ENCODE measurements at regions of chr6 and their contacts with region 1.

Region 1: GRCh38 chr6:38012573-38012972 is 193.0 kb downstream of the ZFAND3 start:
- DNase-seq: no peak
- ATAC-seq: peak; percentile 89
- H3K4me3 Mint-ChIP-seq: no peak overlapping the region
- H3K27ac Mint-ChIP-seq: no peak overlapping the region
- H3K4me1 Mint-ChIP-seq: peaks cover 33% of the 10 kb centered on the region
- H3K27me3 Mint-ChIP-seq: no peaks in the 10 kb centered on the region
- CTCF ChIP-seq: no peak

Region 2: GRCh38 chr6:37324131-37325033 is 688.2 kb before region 1 on chr6:
- CTCF ChIA-PET with region 1: no interaction called
- POLR2A ChIA-PET with region 1: no interaction called
- intact Hi-C with region 1: loop called (anchors 5 kb)
- DNase-seq: no peak
- ATAC-seq: no peak
- H3K4me3 Mint-ChIP-seq: no peak overlapping the region
- H3K27ac Mint-ChIP-seq: no peak overlapping the region
- H3K4me1 Mint-ChIP-seq: peaks cover 2% of the 10 kb centered on the region
- H3K27me3 Mint-ChIP-seq: no peaks in the 10 kb centered on the region
- CTCF ChIP-seq: no peak

Region 3: DNA sequence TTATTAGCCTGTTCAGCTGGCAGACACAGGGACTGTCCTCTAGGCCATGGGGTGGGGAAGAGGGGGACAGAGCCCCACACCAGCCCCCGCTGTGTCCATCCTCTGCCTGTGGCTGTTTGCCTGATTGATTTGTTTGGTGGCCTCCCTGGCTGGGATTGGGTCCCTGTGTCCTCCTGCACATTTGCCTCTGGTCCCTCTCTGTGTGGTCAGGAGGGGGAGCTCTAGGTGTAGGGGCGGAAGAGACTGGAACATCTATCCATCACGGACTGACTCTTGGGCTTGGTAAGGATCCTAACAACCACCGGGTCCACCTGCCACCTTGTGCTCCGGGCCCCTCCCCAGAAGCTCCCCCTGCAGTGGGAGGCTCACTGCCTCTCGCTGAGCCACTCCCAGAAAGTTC is 474.5 kb before region 1 on chr6:
- CTCF ChIA-PET with region 1: no interaction called
- POLR2A ChIA-PET with region 1: no interaction called
- intact Hi-C with region 1: loop called (anchors 5 kb)
- DNase-seq: no peak
- ATAC-seq: peak; percentile 27
- H3K4me3 Mint-ChIP-seq: no peak overlapping the region
- H3K27ac Mint-ChIP-seq: peak overlapping the region; percentile 26
- H3K4me1 Mint-ChIP-seq: peaks cover 16% of the 10 kb centered on the region
- H3K27me3 Mint-ChIP-seq: peaks cover 20% of the 10 kb centered on the region
- CTCF ChIP-seq: no peak

Region 4: GRCh38 chr6:37698261-37699137 is 314.1 kb before region 1 on chr6:
- CTCF ChIA-PET with region 1: no interaction called
- POLR2A ChIA-PET with region 1: no interaction called
- intact Hi-C with region 1: loop called (anchors 2 kb)
- DNase-seq: peak; percentile 58
- ATAC-seq: peak; percentile 41
- H3K4me3 Mint-ChIP-seq: peak overlapping the region; percentile 97
- H3K27ac Mint-ChIP-seq: peak overlapping the region; percentile 93
- H3K4me1 Mint-ChIP-seq: peaks cover 19% of the 10 kb centered on the region
- H3K27me3 Mint-ChIP-seq: peaks cover 15% of the 10 kb centered on the region
- CTCF ChIP-seq: no peak

Region 5: GRCh38 chr6:37791156-37791919 is 221.2 kb before region 1 on chr6:
- CTCF ChIA-PET with region 1: interaction called, 3 read pairs
- POLR2A ChIA-PET with region 1: no interaction called
- intact Hi-C with region 1: loop called (anchors 1 kb)
- DNase-seq: peak; percentile 66
- ATAC-seq: peak; percentile 100
- H3K4me3 Mint-ChIP-seq: no peak overlapping the region
- H3K27ac Mint-ChIP-seq: no peak overlapping the region
- H3K4me1 Mint-ChIP-seq: peaks cover 7% of the 10 kb centered on the region
- H3K27me3 Mint-ChIP-seq: no peaks in the 10 kb centered on the region
- CTCF ChIP-seq: peak; percentile 73

Region 6: GRCh38 chr6:37850728-37851285 is 161.8 kb before region 1 on chr6:
- CTCF ChIA-PET with region 1: no interaction called
- POLR2A ChIA-PET with region 1: no interaction called
- intact Hi-C with region 1: no loop called
- DNase-seq: no peak
- ATAC-seq: peak; percentile 37
- H3K4me3 Mint-ChIP-seq: no peak overlapping the region
- H3K27ac Mint-ChIP-seq: no peak overlapping the region
- H3K4me1 Mint-ChIP-seq: peaks cover 52% of the 10 kb centered on the region
- H3K27me3 Mint-ChIP-seq: no peaks in the 10 kb centered on the region
- CTCF ChIP-seq: no peak

Region 7: DNA sequence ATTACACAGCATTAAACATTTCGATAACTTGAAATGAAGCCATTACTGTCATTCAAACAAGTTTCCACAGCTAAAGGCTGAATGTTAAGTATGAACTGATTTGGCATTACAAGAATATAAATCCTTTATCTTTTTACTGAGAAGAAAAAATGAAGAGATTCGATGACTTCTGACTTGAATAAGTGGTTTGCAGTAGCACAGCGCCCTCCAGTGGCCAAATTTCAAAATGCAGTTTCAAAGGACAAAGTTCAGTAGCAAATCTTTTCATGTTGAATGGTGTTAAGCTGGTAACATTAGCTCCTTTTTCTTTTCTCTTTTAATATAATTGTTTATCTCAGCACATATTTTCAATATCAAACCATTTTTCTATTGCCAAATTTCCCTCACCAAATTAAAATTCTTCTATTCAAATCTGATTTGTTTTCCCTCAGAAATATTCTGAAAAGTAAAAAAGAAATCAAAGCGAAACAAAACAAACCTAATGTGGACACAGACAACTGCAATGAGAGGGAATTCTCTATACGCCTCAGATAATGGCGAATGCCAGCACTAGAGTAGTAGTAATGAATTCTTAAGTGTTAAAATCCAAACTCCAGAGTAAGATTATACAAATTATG is 481.5 kb after region 1 on chr6:
- CTCF ChIA-PET with region 1: interaction called, 4 read pairs
- POLR2A ChIA-PET with region 1: no interaction called
- intact Hi-C with region 1: loop called (anchors 2 kb)
- DNase-seq: peak; percentile 54
- ATAC-seq: peak; percentile 40
- H3K4me3 Mint-ChIP-seq: no peak overlapping the region
- H3K27ac Mint-ChIP-seq: no peak overlapping the region
- H3K4me1 Mint-ChIP-seq: peaks cover 6% of the 10 kb centered on the region
- H3K27me3 Mint-ChIP-seq: no peaks in the 10 kb centered on the region
- CTCF ChIP-seq: peak; percentile 98

Measured in activated B cell treated with CpG ODN at 0.5 μM for 24 hours (primary cell).